Endothelial cell of umbilical vein (primary cell): ENCODE measurements at regions of chr13 and their contacts with region 1.

Region 1: GRCh38 chr13:23427342-23427843 is 6.1 kb downstream of the SACS start:
- DNase-seq: peak; percentile 96
- H3K4me3 ChIP-seq: peak overlapping the region in 1 of 3 experiments; percentile 3
- H3K27ac ChIP-seq: peak overlapping the region; percentile 96
- H3K4me1 ChIP-seq: peaks cover 27% of the 10 kb centered on the region
- H3K27me3 ChIP-seq: no peaks in the 10 kb centered on the region
- CTCF ChIP-seq: no peak
- POLR2A ChIP-seq: no peak

Region 2: GRCh38 chr13:22517544-22517943 is 909.8 kb before region 1 on chr13:
- CTCF ChIA-PET with region 1: no interaction called
- POLR2A ChIA-PET with region 1: no interaction called
- dilution Hi-C with region 1: no loop called
- intact Hi-C with region 1: no loop called
- DNase-seq: no peak
- H3K4me3 ChIP-seq: no peak overlapping the region
- H3K27ac ChIP-seq: no peak overlapping the region
- H3K4me1 ChIP-seq: no peaks in the 10 kb centered on the region
- H3K27me3 ChIP-seq: no peaks in the 10 kb centered on the region
- CTCF ChIP-seq: no peak
- POLR2A ChIP-seq: no peak

Region 3: GRCh38 chr13:23408026-23408425 is 19.4 kb before region 1 on chr13:
- CTCF ChIA-PET with region 1: interaction called, 11 read pairs
- POLR2A ChIA-PET with region 1: no interaction called
- dilution Hi-C with region 1: no loop called
- intact Hi-C with region 1: no loop called
- DNase-seq: no peak
- H3K4me3 ChIP-seq: no peak overlapping the region
- H3K27ac ChIP-seq: no peak overlapping the region
- H3K4me1 ChIP-seq: no peaks in the 10 kb centered on the region
- H3K27me3 ChIP-seq: no peaks in the 10 kb centered on the region
- CTCF ChIP-seq: no peak
- POLR2A ChIP-seq: no peak

Region 4: DNA sequence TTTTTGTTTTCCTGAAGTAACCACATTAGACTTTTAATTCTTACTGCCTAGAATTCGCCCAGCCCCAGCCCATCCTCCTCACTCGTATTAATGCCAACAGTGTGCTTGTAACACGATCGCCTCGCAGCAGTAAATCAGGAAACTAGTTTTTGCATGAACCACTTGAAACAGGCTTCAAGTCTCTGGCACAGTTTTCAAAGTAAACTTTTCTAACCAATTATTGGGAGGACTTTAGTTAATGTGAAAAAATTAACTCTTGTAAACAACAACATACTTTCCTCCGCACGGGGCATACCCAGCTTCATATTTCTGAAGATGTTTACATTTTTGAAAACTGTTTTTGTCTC is 182.0 kb after region 1 on chr13:
- CTCF ChIA-PET with region 1: no interaction called
- POLR2A ChIA-PET with region 1: no interaction called
- dilution Hi-C with region 1: no loop called
- intact Hi-C with region 1: loop called (anchors 2 kb)
- DNase-seq: peak; percentile 67
- H3K4me3 ChIP-seq: peak overlapping the region in 1 of 3 experiments; percentile 9
- H3K27ac ChIP-seq: peak overlapping the region; percentile 69
- H3K4me1 ChIP-seq: peaks cover 27% of the 10 kb centered on the region
- H3K27me3 ChIP-seq: peaks cover 2 to 3% of the 10 kb centered on the region in 2 experiments
- CTCF ChIP-seq: no peak
- POLR2A ChIP-seq: no peak